ENCODE measurements at regions of chr17 and their contacts with region 1.

Region 1: DNA sequence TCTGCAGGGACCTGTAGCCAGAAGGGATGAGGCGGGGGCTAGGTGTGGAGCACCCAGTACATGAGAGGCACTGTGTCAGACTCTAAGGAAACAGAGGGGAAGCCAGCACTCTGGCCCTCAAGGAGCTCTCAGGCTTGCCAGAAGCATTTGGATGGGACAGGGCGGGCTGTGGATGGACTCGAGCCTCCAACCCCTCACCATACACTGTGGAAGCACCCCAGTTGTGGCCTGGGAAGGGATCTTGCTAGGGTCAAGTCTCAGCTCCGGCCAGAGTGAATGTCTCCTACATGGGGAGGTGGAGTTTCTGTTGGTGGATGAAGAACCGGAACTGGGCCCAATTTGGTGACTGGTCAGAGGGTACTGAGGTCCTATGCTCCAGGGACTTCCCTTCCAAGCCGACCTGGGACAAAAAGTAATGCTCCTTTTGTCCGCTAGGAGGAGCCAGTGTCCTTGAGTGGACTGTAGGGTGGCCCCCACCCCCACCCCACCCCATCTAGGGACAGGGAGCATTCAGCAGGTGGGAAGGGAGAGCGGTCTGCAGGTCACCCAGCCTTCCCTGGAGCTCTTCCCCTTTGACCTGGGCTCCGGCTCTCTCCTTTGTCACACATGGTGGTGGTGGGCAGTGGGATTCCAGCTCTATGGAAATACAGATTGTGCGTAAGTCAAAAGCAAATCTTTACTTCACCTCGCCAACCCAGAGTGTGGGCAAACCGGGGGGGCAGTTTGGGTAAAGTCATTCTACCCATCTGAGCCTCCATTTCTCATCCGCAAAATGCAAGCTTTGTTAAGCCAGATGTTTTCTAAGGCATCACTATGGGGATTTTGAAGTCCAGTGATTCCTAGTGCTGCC is 20.4 kb upstream of the PHB1 start:
- DNase-seq: peak; percentile 73 to 95
- ATAC-seq: peak; percentile 72 to 91
- H3K4me3 ChIP-seq: no peak overlapping the region
- H3K27ac ChIP-seq: no peak overlapping the region
- H3K4me1 ChIP-seq: no peaks in the 10 kb centered on the region
- CTCF ChIP-seq: peak; percentile 83
- EP300 ChIP-seq: no peak
- POLR2A ChIP-seq: no peak
- RAD21 ChIP-seq: peak; percentile 80 to 82

Region 2: GRCh38 chr17:49425004-49425286 is 10.1 kb before region 1 on chr17:
- CTCF ChIA-PET with region 1: interaction called, 27 read pairs
- POLR2A ChIA-PET with region 1: no interaction called
- DNase-seq: no peak
- ATAC-seq: no peak
- H3K4me3 ChIP-seq: no peak overlapping the region
- H3K27ac ChIP-seq: no peak overlapping the region
- H3K4me1 ChIP-seq: no peaks in the 10 kb centered on the region
- CTCF ChIP-seq: no peak
- EP300 ChIP-seq: no peak
- POLR2A ChIP-seq: no peak
- RAD21 ChIP-seq: no peak

Region 3: DNA sequence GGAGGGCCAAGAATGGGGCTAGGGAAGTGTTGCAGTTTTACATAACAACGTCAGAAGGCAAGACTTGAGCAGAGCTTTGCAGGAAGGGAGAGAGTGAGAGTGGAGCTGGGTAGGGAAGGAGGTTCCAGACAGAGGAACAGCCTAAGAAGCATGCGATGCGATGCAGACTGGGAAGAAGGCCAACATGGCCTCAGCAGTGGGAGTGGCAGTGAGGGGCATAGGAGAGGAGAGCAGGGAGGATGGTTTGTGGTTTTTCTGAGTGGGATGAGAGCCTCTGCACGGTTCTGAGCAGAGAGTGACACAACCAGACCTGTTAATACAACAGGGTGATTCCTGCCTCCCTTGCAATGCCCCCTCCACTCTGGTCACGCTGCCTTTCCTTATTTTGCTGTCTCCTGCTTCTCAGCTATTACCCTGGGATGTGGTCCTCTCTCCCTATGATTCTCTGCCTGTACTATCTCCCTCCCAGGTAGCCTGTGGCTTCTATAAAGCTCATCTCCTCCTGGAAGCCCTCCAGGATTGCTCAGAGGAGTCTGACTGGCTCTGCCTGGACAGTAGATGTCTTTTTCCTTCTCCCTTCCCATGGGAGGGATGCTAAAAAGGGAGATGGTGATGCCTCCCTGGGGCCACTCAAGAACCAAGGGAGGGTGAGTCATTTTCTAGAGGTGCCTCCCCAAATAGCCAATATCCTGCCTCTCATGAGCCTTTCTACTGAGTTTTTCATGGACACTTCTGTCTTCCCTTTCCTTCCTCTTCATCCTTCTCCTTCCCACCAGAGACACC is 21.3 kb after region 1 on chr17:
- CTCF ChIA-PET with region 1: interaction called, 20 read pairs
- POLR2A ChIA-PET with region 1: no interaction called
- DNase-seq: no peak
- ATAC-seq: 0 out of 6 replicates have a peak, but pooled peaks of 1 of the 2 experiments have one; percentile 14
- H3K4me3 ChIP-seq: no peak overlapping the region
- H3K27ac ChIP-seq: no peak overlapping the region
- H3K4me1 ChIP-seq: peaks cover 4% of the 10 kb centered on the region; the same call in 1 of the 3 replicates
- CTCF ChIP-seq: no peak
- EP300 ChIP-seq: no peak
- POLR2A ChIP-seq: no peak
- RAD21 ChIP-seq: no peak

Region 4: DNA sequence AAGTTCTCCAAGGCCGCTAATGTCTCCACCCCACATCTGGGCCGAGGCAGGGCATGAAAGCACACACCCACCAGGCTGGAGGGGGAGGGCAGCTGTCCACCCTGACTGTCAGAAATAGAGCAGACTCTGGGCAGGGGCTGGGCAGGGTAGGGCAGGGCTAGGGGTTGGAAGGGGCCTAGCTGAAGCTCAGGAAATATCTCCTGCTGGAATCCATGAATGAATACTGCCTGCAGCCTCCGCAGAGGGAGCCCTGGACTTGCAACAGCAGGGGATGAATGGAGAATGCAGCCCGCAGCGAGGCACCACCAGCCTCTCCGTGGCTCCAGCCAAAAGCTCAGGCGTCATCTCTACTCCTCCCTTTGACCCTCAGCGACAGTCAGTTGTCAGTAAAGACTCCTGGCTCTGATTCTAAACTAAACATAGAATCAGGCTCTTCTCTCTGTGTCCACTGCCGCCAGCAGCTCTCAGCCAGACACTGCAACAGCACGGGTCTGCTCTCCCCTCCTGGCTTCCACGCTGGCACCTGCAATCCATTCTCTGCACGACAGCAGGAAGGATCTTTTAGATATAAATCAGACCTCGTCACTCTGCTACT is 36.1 kb after region 1 on chr17:
- CTCF ChIA-PET with region 1: interaction called, 11 read pairs
- POLR2A ChIA-PET with region 1: no interaction called
- DNase-seq: no peak
- ATAC-seq: peak in 1 of 2 experiments; percentile 32; a peak in 3 of 6 replicates
- H3K4me3 ChIP-seq: no peak overlapping the region
- H3K27ac ChIP-seq: no peak overlapping the region
- H3K4me1 ChIP-seq: no peaks in the 10 kb centered on the region
- CTCF ChIP-seq: no peak
- EP300 ChIP-seq: no peak
- POLR2A ChIP-seq: no peak
- RAD21 ChIP-seq: no peak

Region 5: DNA sequence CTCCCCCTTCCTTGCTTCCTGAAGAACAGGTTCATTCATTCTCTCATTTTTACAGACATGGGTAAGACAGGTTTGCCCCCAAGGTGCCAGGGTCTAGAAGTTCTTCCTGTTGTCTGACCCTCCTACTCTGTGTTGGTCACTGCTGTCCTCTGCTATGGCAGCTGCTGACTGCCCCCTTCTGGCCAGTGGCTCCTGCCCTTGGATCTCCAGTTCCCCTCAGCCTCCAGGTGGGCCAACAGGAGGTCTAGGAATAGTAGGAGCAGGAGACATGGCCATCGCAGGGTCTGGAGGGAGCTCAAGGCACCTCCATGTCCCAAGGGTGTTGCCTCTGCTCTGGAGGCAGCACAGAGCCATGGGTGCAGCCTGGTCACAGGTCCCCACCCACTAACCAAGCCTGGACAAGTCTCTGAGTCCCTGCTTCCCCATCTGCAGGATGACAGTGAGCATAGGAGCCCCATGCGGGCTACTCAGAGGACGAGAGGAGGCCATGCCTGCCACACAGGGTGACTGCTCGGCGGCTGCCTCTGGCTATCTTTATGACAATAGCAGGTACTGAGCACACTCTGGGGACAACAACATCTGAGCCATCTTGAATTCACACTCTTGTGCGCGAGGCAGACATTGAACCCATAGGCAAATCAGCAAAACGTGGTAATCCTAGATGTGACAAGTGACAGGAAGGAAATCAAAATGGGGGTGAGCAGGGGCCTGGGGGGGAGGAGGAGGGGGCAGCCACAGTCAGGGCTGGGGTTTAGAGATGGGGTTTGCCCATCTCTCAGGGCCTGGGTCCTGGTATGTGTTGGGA is 113.7 kb after region 1 on chr17:
- CTCF ChIA-PET with region 1: interaction called, 317 read pairs
- POLR2A ChIA-PET with region 1: no interaction called
- DNase-seq: peak; percentile 64 to 66
- ATAC-seq: peak; percentile 31 to 91; a peak in 3 of 6 replicates
- H3K4me3 ChIP-seq: no peak overlapping the region
- H3K27ac ChIP-seq: no peak overlapping the region
- H3K4me1 ChIP-seq: no peaks in the 10 kb centered on the region
- CTCF ChIP-seq: peak; percentile 60
- EP300 ChIP-seq: no peak
- POLR2A ChIP-seq: no peak
- RAD21 ChIP-seq: peak; percentile 71 to 86

Measured in A549 (cell line).